K562 (cell line): ENCODE measurements at regions of chr11 and their contacts with region 1.

Region 1: GRCh38 chr11:12496171-12497025 is 119.0 kb downstream of the PARVA start:
- DNase-seq: no peak
- ATAC-seq: no peak
- H3K4me3 ChIP-seq: no peak overlapping the region
- H3K27ac ChIP-seq: no peak overlapping the region
- H3K4me1 ChIP-seq: no peaks in the 10 kb centered on the region; a peak in 1 of 5 replicates
- H3K27me3 ChIP-seq: peaks cover 7 to 9% of the 10 kb centered on the region in 2 experiments; a peak in 3 of 5 replicates
- CTCF ChIP-seq: 0 out of 6 replicates have a peak, but pooled peaks of 2 of the 3 experiments have one; percentile 13 to 15
- EP300 ChIP-seq: no peak
- POLR2A ChIP-seq: no peak
- RAD21 ChIP-seq: no peak

Region 2: GRCh38 chr11:12417728-12418611 is 78.4 kb before region 1 on chr11:
- CTCF ChIA-PET with region 1: no interaction called
- POLR2A ChIA-PET with region 1: no interaction called
- in situ Hi-C with region 1: no loop called
- intact Hi-C with region 1: loop called (anchors 2 kb)
- DNase-seq: peak in 2 of 4 experiments; percentile 19 to 26
- ATAC-seq: peak; percentile 49
- H3K4me3 ChIP-seq: no peak overlapping the region
- H3K27ac ChIP-seq: no peak overlapping the region
- H3K4me1 ChIP-seq: peaks cover 10 to 11% of the 10 kb centered on the region in 2 experiments
- H3K27me3 ChIP-seq: no peaks in the 10 kb centered on the region; a peak in 2 of 5 replicates
- CTCF ChIP-seq: no peak
- EP300 ChIP-seq: no peak
- POLR2A ChIP-seq: no peak
- RAD21 ChIP-seq: no peak

Region 3: DNA sequence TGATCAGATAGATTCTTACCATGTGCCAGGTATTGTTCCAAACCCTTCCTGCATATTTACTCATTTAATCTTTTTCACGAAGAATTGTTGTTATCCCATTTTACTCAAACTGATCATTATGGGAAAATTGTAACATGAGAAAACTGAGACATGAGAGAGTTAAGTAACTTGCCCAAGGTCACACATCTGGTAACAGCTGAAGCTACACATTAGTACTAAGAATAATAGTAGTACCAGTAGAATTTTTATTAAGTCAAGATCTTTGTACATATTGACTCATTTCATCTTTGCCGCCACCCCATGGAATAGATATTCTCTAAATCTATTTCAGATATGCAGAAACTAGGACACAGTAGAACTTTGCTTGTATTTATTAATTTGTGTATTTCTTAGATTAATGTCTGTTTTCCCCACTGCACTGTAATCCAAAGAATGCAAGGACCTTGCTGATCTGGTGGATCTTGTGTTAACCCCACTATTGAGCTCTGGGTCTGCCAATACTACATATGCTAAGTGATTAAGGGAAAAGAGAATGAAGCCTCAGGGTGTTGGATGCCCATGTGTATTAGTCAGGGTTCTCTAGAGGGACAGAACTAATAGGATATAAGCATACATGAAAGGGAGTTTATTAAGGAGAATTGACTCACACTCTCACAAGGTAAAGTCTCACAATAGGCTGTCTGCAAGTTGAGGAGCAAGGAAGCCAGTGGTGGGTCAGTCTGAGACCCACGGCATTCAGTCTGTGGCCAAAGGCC is 46.3 kb before region 1 on chr11:
- CTCF ChIA-PET with region 1: no interaction called
- POLR2A ChIA-PET with region 1: no interaction called
- in situ Hi-C with region 1: no loop called
- intact Hi-C with region 1: no loop called
- DNase-seq: no peak
- ATAC-seq: no peak
- H3K4me3 ChIP-seq: no peak overlapping the region
- H3K27ac ChIP-seq: no peak overlapping the region
- H3K4me1 ChIP-seq: no peaks in the 10 kb centered on the region
- H3K27me3 ChIP-seq: peaks cover 3 to 26% of the 10 kb centered on the region in 2 experiments; a peak in 4 of 5 replicates
- CTCF ChIP-seq: no peak
- EP300 ChIP-seq: no peak
- POLR2A ChIP-seq: no peak
- RAD21 ChIP-seq: no peak